ENCODE measurements at regions of chr6 and their contacts with region 1.

Region 1: GRCh38 chr6:111057074-111057752 is 30.1 kb upstream of the SLC16A10 start:
- DNase-seq: peak; percentile 76

Region 2: GRCh38 chr6:110949679-110950285 is 107.4 kb before region 1 on chr6:
- CTCF ChIA-PET with region 1: no interaction called
- POLR2A ChIA-PET with region 1: no interaction called
- DNase-seq: no peak

Region 3: GRCh38 chr6:111041917-111042316 is 15.3 kb before region 1 on chr6:
- CTCF ChIA-PET with region 1: interaction called, 14 read pairs
- POLR2A ChIA-PET with region 1: interaction called, 3 read pairs
- DNase-seq: no peak

Region 4: DNA sequence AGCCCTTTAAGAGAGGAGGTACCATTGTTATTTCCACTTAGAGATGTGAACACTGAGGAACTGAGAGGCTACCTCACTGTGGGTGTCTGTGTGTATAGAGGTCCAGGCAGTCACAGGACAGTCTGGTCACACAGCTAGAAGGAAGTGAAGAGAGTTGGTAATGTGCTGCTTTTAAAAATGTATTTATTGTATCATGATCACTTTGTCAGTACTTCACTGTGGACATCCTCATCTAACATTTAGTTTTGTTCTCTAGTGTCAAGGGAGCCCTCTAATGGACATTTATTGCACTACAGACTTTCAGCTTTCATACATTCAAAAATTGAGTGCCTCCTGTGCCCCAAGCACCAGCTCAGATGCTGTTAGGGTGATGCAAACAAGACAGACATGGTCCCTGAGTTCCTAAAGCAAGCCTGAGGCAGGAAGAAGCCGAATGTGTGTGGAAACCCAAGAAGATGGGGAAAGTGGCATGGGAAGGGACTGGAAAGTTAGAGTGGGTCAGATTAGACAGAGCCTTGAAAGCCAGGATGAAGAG is 153.0 kb after region 1 on chr6:
- CTCF ChIA-PET with region 1: interaction called, 12 read pairs
- POLR2A ChIA-PET with region 1: no interaction called
- DNase-seq: peak; percentile 71